Activated naive CD4-positive, alpha-beta T cell treated with anti-CD3 and anti-CD28 coated beads for 36 hours (primary cell): ENCODE measurements at regions of chr12 and their contacts with region 1.

Region 1: DNA sequence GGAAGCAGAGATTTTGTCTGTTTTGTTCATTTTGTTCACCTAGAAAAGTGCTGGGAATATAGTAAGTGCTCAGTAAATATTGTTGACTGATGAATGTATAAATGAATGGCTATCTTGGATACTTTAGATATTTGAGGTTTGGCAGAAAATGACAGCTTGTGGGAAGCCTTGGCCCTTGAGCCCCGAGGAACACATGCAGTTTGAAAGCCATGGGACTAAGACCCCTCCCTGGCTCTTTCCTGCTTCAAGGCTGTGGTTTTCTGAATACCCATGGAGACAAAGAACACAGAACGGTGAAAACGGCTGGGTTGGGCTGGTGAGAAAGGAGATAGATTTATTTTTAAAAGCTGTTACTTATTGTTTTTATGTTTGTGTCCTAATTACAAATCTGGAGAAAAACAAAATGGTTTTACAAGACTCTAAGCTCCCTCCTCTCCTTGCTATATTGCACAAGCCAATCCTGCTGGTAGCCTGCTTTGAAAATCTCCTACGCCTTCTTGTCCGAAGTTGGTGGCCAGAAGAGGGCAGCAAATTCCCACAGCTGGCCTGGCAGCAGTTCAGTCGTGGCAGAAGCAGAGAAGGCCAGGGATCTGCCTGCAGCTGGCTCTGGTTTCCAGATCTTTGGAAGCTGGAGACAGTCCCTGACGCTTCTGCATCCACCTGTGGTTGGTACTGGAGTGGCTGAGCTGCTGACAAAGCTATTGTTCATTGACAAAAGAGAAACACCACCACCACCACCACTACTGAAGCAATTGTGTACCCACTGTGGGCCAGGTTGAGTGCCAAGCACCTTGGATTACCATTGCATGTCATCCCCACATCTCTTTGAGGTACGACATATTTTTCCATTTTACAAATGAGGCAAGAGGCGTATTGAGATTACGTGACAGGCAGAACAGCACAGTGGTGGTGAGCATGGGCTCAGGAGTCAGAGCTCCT is 5.2 kb upstream of the KRT85 start:
- DNase-seq: peak; percentile 77
- H3K4me3 Mint-ChIP-seq: no peak overlapping the region
- H3K27ac Mint-ChIP-seq: no peak overlapping the region
- H3K4me1 Mint-ChIP-seq: no peaks in the 10 kb centered on the region
- H3K27me3 Mint-ChIP-seq: no peaks in the 10 kb centered on the region

Region 2: DNA sequence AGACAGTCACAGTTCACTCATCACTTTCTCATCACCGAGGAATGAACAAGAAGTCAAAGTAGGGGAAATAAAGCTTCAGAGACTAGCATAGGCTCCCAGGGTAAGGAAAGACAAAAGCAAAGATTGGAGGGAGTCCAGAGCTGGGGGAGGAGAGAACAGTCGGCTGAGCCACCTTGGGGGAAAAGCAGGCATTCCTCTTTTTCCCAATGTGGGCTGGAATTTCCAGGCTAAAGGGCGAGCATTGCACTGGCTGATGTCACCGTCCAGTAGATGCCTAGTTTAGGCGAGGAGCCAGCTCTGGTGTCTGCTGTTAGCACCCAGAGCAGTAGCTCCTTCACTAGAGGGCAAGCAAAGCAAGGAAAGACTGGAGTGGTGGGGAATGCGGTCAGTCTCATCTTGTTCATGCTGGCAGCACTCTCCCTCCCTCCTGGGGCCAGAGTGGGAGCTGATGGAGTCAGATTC is 70.1 kb after region 1 on chr12:
- CTCF ChIA-PET with region 1: no interaction called
- intact Hi-C with region 1: no loop called
- DNase-seq: no peak
- H3K4me3 Mint-ChIP-seq: no peak overlapping the region
- H3K27ac Mint-ChIP-seq: no peak overlapping the region
- H3K4me1 Mint-ChIP-seq: no peaks in the 10 kb centered on the region
- H3K27me3 Mint-ChIP-seq: peaks cover 12% of the 10 kb centered on the region

Region 3: GRCh38 chr12:52506858-52507715 is 134.6 kb after region 1 on chr12:
- CTCF ChIA-PET with region 1: interaction called, 11 read pairs
- intact Hi-C with region 1: loop called (anchors 10 kb)
- DNase-seq: no peak
- H3K4me3 Mint-ChIP-seq: no peak overlapping the region
- H3K27ac Mint-ChIP-seq: no peak overlapping the region
- H3K4me1 Mint-ChIP-seq: peaks cover 3% of the 10 kb centered on the region
- H3K27me3 Mint-ChIP-seq: peaks cover 35% of the 10 kb centered on the region

Region 4: GRCh38 chr12:52539083-52539820 is 166.8 kb after region 1 on chr12:
- CTCF ChIA-PET with region 1: interaction called, 3 read pairs
- intact Hi-C with region 1: loop called (anchors 10 kb)
- DNase-seq: no peak
- H3K4me3 Mint-ChIP-seq: no peak overlapping the region
- H3K27ac Mint-ChIP-seq: no peak overlapping the region
- H3K4me1 Mint-ChIP-seq: no peaks in the 10 kb centered on the region
- H3K27me3 Mint-ChIP-seq: no peaks in the 10 kb centered on the region

Region 5: GRCh38 chr12:52870351-52871290 is 498.1 kb after region 1 on chr12:
- CTCF ChIA-PET with region 1: interaction called, 10 read pairs
- intact Hi-C with region 1: loop called (anchors 2 kb)
- DNase-seq: peak; percentile 88
- H3K4me3 Mint-ChIP-seq: no peak overlapping the region
- H3K27ac Mint-ChIP-seq: no peak overlapping the region
- H3K4me1 Mint-ChIP-seq: peaks cover 25% of the 10 kb centered on the region
- H3K27me3 Mint-ChIP-seq: no peaks in the 10 kb centered on the region